GM12878 (cell line): ENCODE measurements at regions of chr7 and their contacts with region 1.

Region 1: DNA sequence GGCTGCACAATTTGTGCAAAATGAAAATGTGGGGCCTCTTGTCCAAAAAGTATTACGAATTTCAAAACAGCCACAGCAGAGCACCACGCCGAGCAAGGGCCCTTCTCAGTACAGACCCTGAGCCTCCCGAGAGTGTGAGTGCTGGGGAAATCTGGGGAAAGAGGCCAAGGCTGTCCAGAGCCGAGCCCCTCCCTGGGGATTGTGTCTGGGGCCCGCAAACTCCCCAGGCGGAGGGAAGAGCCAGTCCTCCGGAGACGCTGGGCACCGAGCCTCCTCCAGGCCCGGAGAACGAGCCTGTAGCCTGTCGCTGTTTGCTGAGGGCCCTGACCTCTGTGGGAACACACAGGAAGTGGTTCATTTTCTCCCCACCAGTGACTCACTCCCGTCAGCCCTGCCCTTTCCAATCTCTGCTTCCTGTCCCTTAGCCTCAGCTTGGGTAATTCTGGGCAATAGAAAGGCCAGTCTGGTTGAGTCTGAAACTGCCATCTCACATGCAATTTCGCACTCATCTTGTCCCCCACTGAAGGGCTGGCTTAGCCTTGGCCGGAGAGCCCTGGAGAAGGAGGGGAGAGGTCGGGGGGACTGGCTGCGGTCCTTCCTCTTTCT is 19.5 kb upstream of the GNA12 start:
- DNase-seq: peak; percentile 84
- ATAC-seq: peak; percentile 95
- H3K4me3 ChIP-seq: peak overlapping the region; percentile 49; the same call in 1 of the 2 replicates
- H3K27ac ChIP-seq: peak overlapping the region; percentile 89
- H3K4me1 ChIP-seq: peaks cover 24% of the 10 kb centered on the region
- H3K27me3 ChIP-seq: no peaks in the 10 kb centered on the region
- CTCF ChIP-seq: no peak
- EP300 ChIP-seq: peak; percentile 30 to 71; a peak in 1 of 4 replicates
- POLR2A ChIP-seq: peak; percentile 91
- RAD21 ChIP-seq: no peak

Region 2: DNA sequence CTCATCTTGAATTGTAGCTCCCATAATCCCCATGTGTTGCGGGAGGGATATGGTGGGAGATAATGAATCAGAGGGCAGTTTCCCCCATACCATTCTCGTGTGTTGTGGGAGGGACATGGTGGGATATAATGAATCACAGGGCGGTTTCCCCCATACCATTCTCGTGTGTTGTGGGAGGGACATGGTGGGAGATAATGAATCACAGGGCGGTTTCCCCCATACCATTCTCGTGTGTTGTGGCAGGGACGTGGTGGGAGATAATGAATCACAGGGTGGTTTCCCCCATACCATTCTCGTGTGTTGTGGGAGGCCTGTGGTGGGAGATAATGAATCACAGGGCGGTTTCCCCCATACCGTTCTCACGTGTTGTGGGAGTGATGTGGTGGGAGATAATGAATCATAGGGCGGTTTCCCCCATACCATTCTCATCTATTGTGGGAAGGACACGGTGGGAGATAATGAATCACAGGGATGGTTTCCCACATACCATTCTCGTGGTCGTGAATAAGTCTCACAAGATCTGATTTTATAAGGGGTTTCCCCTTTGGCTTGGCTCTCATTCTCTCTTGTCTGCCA is 901.8 kb before region 1 on chr7:
- CTCF ChIA-PET with region 1: no interaction called
- POLR2A ChIA-PET with region 1: no interaction called
- RAD21 ChIA-PET with region 1: no interaction called
- SMC1A ChIA-PET with region 1: no interaction called
- in situ Hi-C with region 1: no loop called
- intact Hi-C with region 1: no loop called
- DNase-seq: peak; percentile 64
- ATAC-seq: peak; percentile 18
- H3K4me3 ChIP-seq: no peak overlapping the region
- H3K27ac ChIP-seq: no peak overlapping the region
- H3K4me1 ChIP-seq: no peaks in the 10 kb centered on the region
- H3K27me3 ChIP-seq: no peaks in the 10 kb centered on the region
- CTCF ChIP-seq: no peak
- EP300 ChIP-seq: no peak
- POLR2A ChIP-seq: no peak
- RAD21 ChIP-seq: no peak

Region 3: GRCh38 chr7:2779086-2779485 is 84.5 kb before region 1 on chr7:
- CTCF ChIA-PET with region 1: no interaction called
- POLR2A ChIA-PET with region 1: no interaction called
- RAD21 ChIA-PET with region 1: no interaction called
- SMC1A ChIA-PET with region 1: no interaction called
- in situ Hi-C with region 1: no loop called
- intact Hi-C with region 1: no loop called
- DNase-seq: no peak
- ATAC-seq: no peak
- H3K4me3 ChIP-seq: no peak overlapping the region
- H3K27ac ChIP-seq: no peak overlapping the region
- H3K4me1 ChIP-seq: no peaks in the 10 kb centered on the region
- H3K27me3 ChIP-seq: no peaks in the 10 kb centered on the region
- CTCF ChIP-seq: no peak
- EP300 ChIP-seq: no peak
- POLR2A ChIP-seq: no peak
- RAD21 ChIP-seq: no peak

Region 4: DNA sequence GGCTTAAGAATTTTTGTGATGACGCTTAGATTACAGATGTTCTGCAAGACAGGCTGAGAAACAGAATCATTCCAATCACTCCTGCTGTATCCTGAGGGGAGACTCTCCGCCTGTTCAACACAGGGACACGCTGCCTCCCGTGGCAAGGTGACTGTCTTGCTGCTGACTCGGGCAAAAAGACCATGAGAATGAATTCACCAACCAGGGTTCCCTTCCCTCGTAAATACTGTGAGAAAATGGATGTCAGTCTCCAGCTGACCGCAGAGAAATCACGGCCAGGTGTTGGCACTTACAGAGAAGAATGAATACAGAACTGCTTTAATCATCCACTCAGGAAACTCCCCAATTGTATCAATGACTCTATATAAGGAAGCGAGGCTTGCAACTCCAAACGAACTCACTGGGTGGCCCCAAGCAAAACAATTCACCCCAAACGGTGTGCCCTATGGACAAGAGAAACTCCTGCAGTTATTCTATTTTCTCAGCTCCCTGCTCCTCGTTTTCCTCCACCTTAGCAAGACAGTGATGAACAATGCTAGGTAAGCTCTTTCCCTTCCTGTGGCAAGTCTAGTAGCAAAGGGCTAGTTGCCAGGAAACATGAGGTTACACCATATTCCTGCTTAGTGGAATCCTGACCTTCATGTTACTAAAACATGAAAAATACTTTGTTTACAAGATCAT is 42.3 kb before region 1 on chr7:
- CTCF ChIA-PET with region 1: interaction called, 7 read pairs
- POLR2A ChIA-PET with region 1: interaction called, 3 read pairs
- RAD21 ChIA-PET with region 1: interaction called, 4 read pairs
- SMC1A ChIA-PET with region 1: interaction called, 7 read pairs
- in situ Hi-C with region 1: no loop called
- intact Hi-C with region 1: loop called (anchors 1 kb)
- DNase-seq: peak; percentile 53
- ATAC-seq: peak; percentile 86
- H3K4me3 ChIP-seq: no peak overlapping the region
- H3K27ac ChIP-seq: peak overlapping the region; percentile 4; the same call in 1 of the 2 replicates
- H3K4me1 ChIP-seq: peaks cover 49% of the 10 kb centered on the region
- H3K27me3 ChIP-seq: no peaks in the 10 kb centered on the region
- CTCF ChIP-seq: peak in 2 of 3 experiments; percentile 6 to 8; a peak in 2 of 6 replicates
- EP300 ChIP-seq: peak; percentile 63 to 70; a peak in 2 of 4 replicates
- POLR2A ChIP-seq: no peak
- RAD21 ChIP-seq: peak; percentile 27; the same call in 1 of the 2 replicates

Region 5: DNA sequence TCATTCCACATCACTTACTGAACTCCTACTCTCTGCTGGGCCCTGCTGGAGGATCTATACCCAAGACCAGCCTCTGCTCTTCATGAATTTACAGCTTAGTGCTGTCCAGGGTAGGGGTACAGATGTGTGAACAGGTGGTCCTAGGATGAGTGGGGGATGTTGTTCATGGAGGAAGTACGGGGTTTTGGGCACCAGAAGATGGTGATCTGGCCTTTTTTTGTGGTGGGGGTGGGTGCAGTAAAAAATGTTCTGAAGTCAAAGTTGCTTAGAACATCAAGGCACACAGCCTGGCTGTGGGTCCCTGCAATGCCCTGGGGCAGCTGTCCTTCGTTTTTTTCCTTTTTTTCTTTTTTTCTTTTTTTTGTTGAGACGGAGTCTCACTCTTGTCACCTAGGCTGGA is 14.7 kb after region 1 on chr7:
- CTCF ChIA-PET with region 1: interaction called, 16 read pairs
- POLR2A ChIA-PET with region 1: interaction called, 3 read pairs
- RAD21 ChIA-PET with region 1: no interaction called
- SMC1A ChIA-PET with region 1: interaction called, 3 read pairs
- in situ Hi-C with region 1: no loop called
- intact Hi-C with region 1: no loop called
- DNase-seq: no peak
- ATAC-seq: no peak
- H3K4me3 ChIP-seq: no peak overlapping the region
- H3K27ac ChIP-seq: no peak overlapping the region
- H3K4me1 ChIP-seq: peaks cover 7% of the 10 kb centered on the region
- H3K27me3 ChIP-seq: no peaks in the 10 kb centered on the region
- CTCF ChIP-seq: no peak
- EP300 ChIP-seq: no peak
- POLR2A ChIP-seq: no peak
- RAD21 ChIP-seq: no peak

Region 6: DNA sequence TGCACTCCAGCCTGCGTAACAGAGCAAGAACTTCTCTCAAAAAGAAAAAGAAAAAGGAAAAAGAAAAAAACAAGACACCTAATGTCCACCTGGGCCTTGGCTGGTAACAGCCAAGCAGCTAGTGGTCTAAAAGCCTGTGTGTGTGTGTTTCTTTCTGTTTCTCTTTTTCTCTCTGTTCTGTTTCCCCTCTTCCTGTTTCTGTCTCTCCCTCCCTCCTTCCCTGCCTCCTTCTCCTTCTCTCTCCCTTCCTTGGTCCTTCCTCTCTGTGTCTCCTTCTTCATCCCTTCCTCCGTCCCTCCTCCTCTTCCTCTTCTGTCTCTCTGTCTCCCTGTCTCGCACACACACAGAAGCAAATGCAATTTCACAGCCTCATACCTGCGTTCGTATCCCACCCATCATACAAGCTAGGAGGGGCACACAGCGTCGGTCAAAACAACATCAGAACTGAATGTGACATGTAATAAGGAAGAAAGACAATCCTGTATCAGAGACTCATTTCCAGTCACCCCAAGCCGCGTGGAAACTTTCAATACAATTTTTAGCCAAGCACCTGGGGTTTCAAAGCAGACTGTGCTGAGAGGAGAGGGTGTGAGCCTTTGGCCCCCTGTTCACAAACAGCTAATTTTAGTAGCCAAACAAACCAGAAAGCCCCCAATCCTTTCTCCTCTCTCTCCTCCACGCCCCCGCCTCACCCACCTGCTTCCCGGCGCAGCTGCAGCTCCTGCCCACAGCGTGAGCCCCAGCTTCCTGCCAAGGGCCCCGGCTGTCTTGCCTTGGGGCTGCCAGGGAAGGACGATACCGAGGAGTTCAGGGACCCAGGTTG is 30.8 kb after region 1 on chr7:
- CTCF ChIA-PET with region 1: interaction called, 14 read pairs
- POLR2A ChIA-PET with region 1: no interaction called
- RAD21 ChIA-PET with region 1: interaction called, 5 read pairs
- SMC1A ChIA-PET with region 1: interaction called, 5 read pairs
- in situ Hi-C with region 1: no loop called
- intact Hi-C with region 1: no loop called
- DNase-seq: peak; percentile 51
- ATAC-seq: peak; percentile 86
- H3K4me3 ChIP-seq: peak overlapping the region; percentile 51
- H3K27ac ChIP-seq: peak overlapping the region; percentile 84
- H3K4me1 ChIP-seq: peaks cover 23% of the 10 kb centered on the region
- H3K27me3 ChIP-seq: no peaks in the 10 kb centered on the region
- CTCF ChIP-seq: no peak
- EP300 ChIP-seq: peak; percentile 37 to 73; a peak in 1 of 4 replicates
- POLR2A ChIP-seq: peak; percentile 54
- RAD21 ChIP-seq: no peak

Region 7: DNA sequence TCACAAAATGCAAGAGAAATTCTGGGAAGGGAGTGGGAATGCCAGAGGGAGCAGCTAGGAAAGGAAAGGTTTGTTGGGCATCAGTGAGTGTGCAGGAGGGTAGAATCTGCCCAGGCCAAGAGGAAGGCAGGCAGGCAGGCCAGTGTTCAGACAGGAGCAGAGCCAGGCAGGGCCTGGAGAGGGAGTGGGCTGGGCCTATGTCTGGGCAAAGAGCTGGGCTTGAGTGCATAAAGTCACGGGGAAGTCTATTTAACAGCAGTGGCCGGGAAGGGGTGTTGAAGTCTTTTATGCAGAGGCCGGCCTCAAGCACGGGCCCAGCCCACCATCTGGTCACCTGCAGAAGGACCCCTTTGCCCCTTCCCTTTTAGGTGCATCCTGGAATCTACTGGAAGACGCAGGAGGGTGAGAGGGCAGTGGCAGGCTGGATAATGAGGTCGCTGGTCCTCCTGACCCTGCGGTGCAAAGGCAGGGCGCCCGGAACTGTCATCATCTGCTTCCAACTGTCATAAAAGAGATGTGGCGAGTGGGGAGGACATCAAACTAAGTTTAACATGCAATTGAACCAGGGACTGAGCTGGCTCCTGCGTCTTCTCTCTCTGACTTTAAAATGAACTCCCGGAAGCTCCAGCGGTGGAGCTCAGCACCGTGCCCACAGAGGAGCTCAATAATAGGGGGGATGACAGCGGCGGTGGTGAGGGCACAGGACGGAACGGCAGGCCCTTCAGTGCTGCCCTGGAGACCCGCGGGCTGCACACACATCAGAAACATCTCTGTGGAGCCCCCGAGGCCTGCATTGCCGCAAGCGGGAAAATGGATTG is 150.6 kb after region 1 on chr7:
- CTCF ChIA-PET with region 1: no interaction called
- POLR2A ChIA-PET with region 1: no interaction called
- RAD21 ChIA-PET with region 1: no interaction called
- SMC1A ChIA-PET with region 1: no interaction called
- in situ Hi-C with region 1: no loop called
- intact Hi-C with region 1: no loop called
- DNase-seq: no peak
- ATAC-seq: no peak
- H3K4me3 ChIP-seq: no peak overlapping the region
- H3K27ac ChIP-seq: no peak overlapping the region
- H3K4me1 ChIP-seq: peaks cover 4% of the 10 kb centered on the region; the same call in 1 of the 2 replicates
- H3K27me3 ChIP-seq: no peaks in the 10 kb centered on the region
- CTCF ChIP-seq: no peak
- EP300 ChIP-seq: no peak
- POLR2A ChIP-seq: no peak
- RAD21 ChIP-seq: no peak

Region 8: GRCh38 chr7:3065724-3066143 is 202.2 kb after region 1 on chr7:
- CTCF ChIA-PET with region 1: interaction called, 34 read pairs
- POLR2A ChIA-PET with region 1: no interaction called
- RAD21 ChIA-PET with region 1: interaction called, 3 read pairs
- SMC1A ChIA-PET with region 1: interaction called, 4 read pairs
- in situ Hi-C with region 1: no loop called
- intact Hi-C with region 1: no loop called
- DNase-seq: no peak
- ATAC-seq: peak; percentile 62
- H3K4me3 ChIP-seq: peak overlapping the region; percentile 13; the same call in 1 of the 2 replicates
- H3K27ac ChIP-seq: no peak overlapping the region
- H3K4me1 ChIP-seq: peaks cover 47% of the 10 kb centered on the region
- H3K27me3 ChIP-seq: no peaks in the 10 kb centered on the region
- CTCF ChIP-seq: peak; percentile 59 to 90 (median 78)
- EP300 ChIP-seq: no peak
- POLR2A ChIP-seq: no peak
- RAD21 ChIP-seq: peak; percentile 70

Region 9: GRCh38 chr7:3673524-3673923 is 810.0 kb after region 1 on chr7:
- CTCF ChIA-PET with region 1: interaction called, 11 read pairs
- POLR2A ChIA-PET with region 1: no interaction called
- RAD21 ChIA-PET with region 1: interaction called, 3 read pairs
- SMC1A ChIA-PET with region 1: interaction called, 4 read pairs
- in situ Hi-C with region 1: no loop called
- intact Hi-C with region 1: no loop called
- DNase-seq: no peak
- ATAC-seq: no peak
- H3K4me3 ChIP-seq: no peak overlapping the region
- H3K27ac ChIP-seq: no peak overlapping the region
- H3K4me1 ChIP-seq: no peaks in the 10 kb centered on the region
- H3K27me3 ChIP-seq: no peaks in the 10 kb centered on the region
- CTCF ChIP-seq: peak in 1 of 3 experiments; percentile 14; a peak in 1 of 6 replicates
- EP300 ChIP-seq: no peak
- POLR2A ChIP-seq: no peak
- RAD21 ChIP-seq: 0 out of 2 replicates have a peak, but pooled peaks have one; percentile 20